ENCODE measurements at regions of chr15 and their contacts with region 1.

Region 1: DNA sequence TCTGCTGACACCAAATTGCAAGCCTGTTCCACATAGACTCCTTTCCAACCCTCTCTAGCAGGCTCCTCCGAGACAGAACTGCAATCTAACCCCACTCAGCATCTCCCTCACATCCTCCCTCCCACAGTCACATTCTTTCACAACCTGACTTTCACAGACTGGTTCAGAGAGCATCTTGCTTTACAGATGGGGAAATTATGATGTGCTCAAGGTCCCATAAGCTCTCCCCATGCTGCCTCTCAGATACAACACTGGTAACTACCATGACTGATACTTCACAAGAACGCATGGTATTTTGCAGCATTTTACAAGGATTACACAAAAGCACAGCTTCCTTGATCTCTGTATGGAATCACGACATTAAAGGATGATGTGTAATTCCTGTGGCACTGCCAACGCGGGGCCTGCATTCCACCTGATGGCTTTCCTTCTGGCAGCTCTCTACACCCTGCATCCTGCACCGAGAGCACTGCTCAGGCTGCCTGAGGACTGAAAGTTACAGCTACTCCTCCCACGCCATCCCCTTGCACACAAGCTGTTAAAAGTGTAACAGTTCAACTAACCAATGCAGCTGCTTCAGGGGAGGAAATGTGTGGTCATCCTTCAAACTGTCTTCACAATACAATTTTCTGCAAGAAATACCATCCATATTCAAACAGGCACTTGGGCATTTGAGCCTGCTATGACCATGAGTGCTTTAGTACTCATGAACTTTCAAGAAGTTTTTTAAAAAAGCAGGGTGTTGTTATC is 27.6 kb downstream of the TBC1D2B start:
- DNase-seq: peak; percentile 53
- H3K4me3 ChIP-seq: no peak overlapping the region
- H3K27ac ChIP-seq: peak overlapping the region; percentile 30
- H3K4me1 ChIP-seq: peaks cover 75% of the 10 kb centered on the region
- CTCF ChIP-seq: no peak

Region 2: GRCh38 chr15:78065284-78065872 is 15.5 kb after region 1 on chr15:
- CTCF ChIA-PET with region 1: no interaction called
- POLR2A ChIA-PET with region 1: interaction called, 44 read pairs
- intact Hi-C with region 1: no loop called
- DNase-seq: no peak
- H3K4me3 ChIP-seq: peak overlapping the region; percentile 50
- H3K27ac ChIP-seq: peak overlapping the region; percentile 82
- H3K4me1 ChIP-seq: peaks cover 91% of the 10 kb centered on the region
- CTCF ChIP-seq: no peak

Measured in OCI-LY7 (cell line).